Activated CD4-positive, alpha-beta T cell treated with anti-CD3 and anti-CD28 coated beads for 36 hours (primary cell): ENCODE measurements at regions of chr22 and their contacts with region 1.

Region 1: DNA sequence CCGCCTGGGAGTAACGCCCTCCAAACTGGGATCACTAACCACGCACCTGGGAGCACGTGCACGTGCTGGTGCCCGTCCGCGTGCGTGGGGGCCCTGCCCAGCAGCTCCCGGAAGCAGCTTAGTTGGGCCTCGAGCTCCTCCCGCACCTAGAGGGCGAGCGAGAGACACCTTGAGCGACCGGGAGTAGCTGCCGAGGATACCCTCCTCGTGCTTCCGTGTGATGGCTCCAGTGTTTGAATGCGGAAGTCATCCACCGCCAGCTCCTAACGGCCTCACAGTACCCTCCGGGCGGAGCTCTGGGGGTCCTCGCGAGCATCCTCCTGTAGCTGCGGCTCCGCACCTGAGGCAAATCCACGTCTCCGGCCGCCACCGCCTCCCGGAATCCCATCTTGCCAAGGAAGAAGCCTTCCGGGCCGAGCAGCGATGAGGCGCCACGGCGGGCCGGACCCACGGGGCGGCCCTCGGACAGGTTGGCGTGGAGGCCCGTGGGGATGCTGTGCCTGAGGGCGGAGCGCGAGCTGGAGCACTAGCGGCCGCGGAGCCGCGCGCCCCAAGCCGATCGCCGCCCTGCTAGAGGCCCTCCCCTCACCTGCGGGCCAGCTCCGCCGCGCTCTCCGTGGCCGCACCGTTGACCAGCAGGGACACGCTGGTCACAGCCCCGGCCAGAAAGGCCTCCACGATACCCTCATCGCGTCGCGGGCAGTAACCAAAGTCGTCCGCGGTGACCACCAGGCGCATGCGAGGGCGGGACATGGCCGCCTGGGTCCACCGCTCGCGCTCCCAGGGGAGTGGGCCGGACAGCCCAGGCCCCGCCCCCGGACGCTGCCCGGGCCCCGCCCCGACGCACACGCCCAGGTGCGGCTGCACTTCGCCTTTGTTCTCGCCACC is at the start of gene YDJC:
- DNase-seq: peak; percentile 98
- ATAC-seq: peak; percentile 88
- H3K4me3 Mint-ChIP-seq: peak within 1 kb of the TSS; percentile 83
- H3K27ac Mint-ChIP-seq: peak within 1 kb of the TSS; percentile 93
- H3K4me1 Mint-ChIP-seq: peaks cover 34% of the 10 kb centered on the region
- H3K27me3 Mint-ChIP-seq: no peaks in the 10 kb centered on the region
- total RNA-seq, gene YDJC: 43.4 to 54.0 TPM

Region 2: GRCh38 chr22:21567456-21568346 is 61.8 kb before region 1 on chr22 and contains the start of gene UBE2L3:
- CTCF ChIA-PET with region 1: interaction called, 9 read pairs
- POLR2A ChIA-PET with region 1: interaction called, 4 read pairs
- intact Hi-C with region 1: loop called in 1 of 2 experiments (anchors 1 kb)
- DNase-seq: peak; percentile 93
- ATAC-seq: peak; percentile 68
- H3K4me3 Mint-ChIP-seq: peak within 1 kb of the TSS; percentile 92
- H3K27ac Mint-ChIP-seq: peak within 1 kb of the TSS; percentile 96
- H3K4me1 Mint-ChIP-seq: peaks cover 38% of the 10 kb centered on the region
- H3K27me3 Mint-ChIP-seq: no peaks in the 10 kb centered on the region
- total RNA-seq, gene UBE2L3: 57.3 to 75.5 TPM

Region 3: GRCh38 chr22:21606775-21607174 is 22.7 kb before region 1 on chr22:
- CTCF ChIA-PET with region 1: interaction called, 11 read pairs
- POLR2A ChIA-PET with region 1: no interaction called
- intact Hi-C with region 1: no loop called
- DNase-seq: no peak
- ATAC-seq: peak; percentile 55
- H3K4me3 Mint-ChIP-seq: no peak overlapping the region
- H3K27ac Mint-ChIP-seq: no peak overlapping the region
- H3K4me1 Mint-ChIP-seq: peaks cover 22% of the 10 kb centered on the region
- H3K27me3 Mint-ChIP-seq: no peaks in the 10 kb centered on the region

Region 4: DNA sequence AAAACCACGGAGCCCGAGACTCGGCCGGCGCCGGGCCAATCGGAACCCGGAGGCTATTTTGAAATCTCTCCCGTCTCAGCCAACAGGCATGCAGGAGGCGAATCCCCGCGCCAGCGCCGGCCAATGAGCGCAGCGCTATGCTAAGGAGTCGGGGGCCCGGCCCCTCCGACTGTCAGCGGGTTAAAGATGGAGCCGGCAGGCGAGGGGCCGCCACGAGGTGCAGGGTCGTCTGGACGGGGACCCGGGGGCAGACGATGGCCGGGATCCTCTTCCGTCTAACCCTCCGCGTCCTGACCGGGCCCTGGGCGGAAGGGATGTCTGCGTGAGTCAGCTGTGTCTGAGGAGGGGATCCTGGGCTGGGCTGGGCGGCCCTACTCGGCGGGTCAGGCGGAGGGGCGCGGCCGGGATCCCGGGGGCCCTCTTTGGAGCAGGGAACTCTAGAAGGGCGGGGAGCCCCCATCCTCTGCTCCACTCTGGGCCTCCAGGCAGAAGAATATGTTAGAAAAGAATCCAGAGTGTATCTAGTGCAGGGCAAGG is 22.6 kb after region 1 on chr22:
- CTCF ChIA-PET with region 1: interaction called, 209 read pairs
- POLR2A ChIA-PET with region 1: interaction called, 5 read pairs
- intact Hi-C with region 1: loop called in 1 of 2 experiments (anchors 1 kb)
- DNase-seq: peak; percentile 95
- ATAC-seq: peak; percentile 97
- H3K4me3 Mint-ChIP-seq: peak overlapping the region; percentile 85
- H3K27ac Mint-ChIP-seq: peak overlapping the region; percentile 86
- H3K4me1 Mint-ChIP-seq: peaks cover 23% of the 10 kb centered on the region
- H3K27me3 Mint-ChIP-seq: no peaks in the 10 kb centered on the region

Region 5: GRCh38 chr22:21666786-21667185 is 37.3 kb after region 1 on chr22:
- CTCF ChIA-PET with region 1: interaction called, 3 read pairs
- POLR2A ChIA-PET with region 1: no interaction called
- intact Hi-C with region 1: loop called in 1 of 2 experiments (anchors 1 kb)
- DNase-seq: no peak
- ATAC-seq: no peak
- H3K4me3 Mint-ChIP-seq: peak overlapping the region; percentile 93
- H3K27ac Mint-ChIP-seq: peak overlapping the region; percentile 96
- H3K4me1 Mint-ChIP-seq: peaks cover 27% of the 10 kb centered on the region
- H3K27me3 Mint-ChIP-seq: no peaks in the 10 kb centered on the region

Region 6: DNA sequence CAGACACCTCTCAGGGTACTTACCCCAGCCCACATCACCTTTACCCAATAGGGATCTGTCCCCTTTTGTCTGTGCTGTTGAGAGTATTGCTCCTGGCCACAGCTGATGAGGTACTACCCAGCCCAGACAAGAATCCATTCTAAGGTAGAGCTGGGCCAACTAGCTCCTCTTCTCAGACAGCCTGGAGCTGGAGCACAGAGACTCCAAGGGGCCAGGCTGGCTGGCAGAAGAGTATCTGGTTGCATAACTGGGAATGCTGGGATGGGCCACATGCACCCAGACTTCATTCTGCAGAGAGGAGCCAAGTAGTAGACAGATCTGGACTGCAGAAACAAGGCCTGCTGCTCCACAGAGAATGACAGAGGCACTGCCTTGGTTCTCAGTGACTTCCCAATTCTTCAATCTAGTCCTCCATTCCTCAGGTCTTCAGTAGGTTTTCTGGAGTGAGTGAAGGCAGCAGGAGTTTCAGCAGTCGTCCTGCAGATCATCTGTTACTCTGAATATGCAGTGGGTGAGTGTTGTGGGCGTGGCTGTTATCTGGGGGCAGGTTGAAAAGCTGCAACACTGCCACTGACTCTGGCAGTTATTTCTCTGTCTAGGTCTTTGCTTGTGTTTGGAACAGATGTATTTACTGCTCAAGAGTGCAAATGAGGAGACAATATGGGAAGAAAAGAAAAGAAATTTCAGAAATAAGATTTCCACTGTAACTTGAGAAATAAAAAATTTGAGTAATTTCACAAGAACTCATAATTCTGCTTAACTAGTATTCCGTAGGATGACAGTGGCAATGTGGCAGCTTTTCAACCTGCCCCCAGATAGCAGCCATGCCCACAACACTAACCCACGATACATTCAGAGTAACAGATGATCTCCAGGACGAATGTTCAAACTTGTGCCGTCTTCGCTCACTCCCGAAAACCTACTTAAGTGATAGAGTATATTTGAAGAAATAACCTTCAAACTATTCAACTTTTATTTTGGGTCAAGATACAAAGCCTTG is 203.1 kb after region 1 on chr22:
- CTCF ChIA-PET with region 1: no interaction called
- POLR2A ChIA-PET with region 1: no interaction called
- intact Hi-C with region 1: no loop called
- DNase-seq: no peak
- ATAC-seq: no peak
- H3K4me3 Mint-ChIP-seq: no peak overlapping the region
- H3K27ac Mint-ChIP-seq: peak overlapping the region; percentile 7
- H3K4me1 Mint-ChIP-seq: peaks cover 68% of the 10 kb centered on the region
- H3K27me3 Mint-ChIP-seq: no peaks in the 10 kb centered on the region

Region 7: DNA sequence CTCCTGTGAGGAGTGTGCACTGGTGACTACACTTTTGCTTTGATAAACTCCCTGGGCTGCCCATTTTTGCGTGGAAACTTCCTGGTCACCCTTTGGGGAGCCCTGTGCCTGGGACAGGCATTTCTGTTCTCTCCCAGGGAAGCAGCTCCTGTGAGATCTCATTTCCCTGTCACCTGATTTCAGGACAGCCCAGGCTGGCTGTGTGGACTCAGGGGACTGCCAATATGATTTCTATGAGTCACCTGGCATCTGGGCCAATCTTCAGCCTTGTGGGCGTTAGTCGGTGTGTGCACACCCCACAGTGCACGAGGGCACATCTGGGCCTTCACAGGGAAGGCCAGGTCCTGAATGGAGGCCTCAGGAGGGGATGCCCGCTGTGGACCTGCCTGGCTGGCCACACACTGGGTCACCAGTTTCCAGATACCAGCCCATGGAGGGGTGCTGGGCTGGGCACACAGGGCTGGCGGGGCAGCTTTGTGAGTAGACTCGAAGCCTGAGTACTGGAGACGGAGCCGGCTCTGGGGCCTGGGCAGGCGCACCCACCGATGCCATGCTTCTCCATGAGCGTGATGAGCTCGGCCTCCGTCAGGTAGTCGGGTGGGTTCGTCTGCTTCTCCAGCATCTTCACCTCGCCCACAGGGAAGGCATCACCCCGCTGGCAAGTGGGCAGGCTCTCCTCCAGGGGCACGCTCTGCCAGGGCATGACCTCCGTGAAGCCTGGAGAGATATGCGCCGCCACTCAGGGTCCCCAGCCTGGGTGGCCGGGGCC is 332.6 kb after region 1 on chr22:
- CTCF ChIA-PET with region 1: no interaction called
- POLR2A ChIA-PET with region 1: no interaction called
- intact Hi-C with region 1: no loop called
- DNase-seq: no peak
- ATAC-seq: no peak
- H3K4me3 Mint-ChIP-seq: no peak overlapping the region
- H3K27ac Mint-ChIP-seq: no peak overlapping the region
- H3K4me1 Mint-ChIP-seq: no peaks in the 10 kb centered on the region
- H3K27me3 Mint-ChIP-seq: no peaks in the 10 kb centered on the region

Region 8: GRCh38 chr22:22215659-22216449 is 586.3 kb after region 1 on chr22:
- CTCF ChIA-PET with region 1: no interaction called
- POLR2A ChIA-PET with region 1: no interaction called
- intact Hi-C with region 1: no loop called
- DNase-seq: no peak
- ATAC-seq: peak; percentile 34
- H3K4me3 Mint-ChIP-seq: no peak overlapping the region
- H3K27ac Mint-ChIP-seq: no peak overlapping the region
- H3K4me1 Mint-ChIP-seq: peaks cover 16% of the 10 kb centered on the region
- H3K27me3 Mint-ChIP-seq: no peaks in the 10 kb centered on the region

Region 9: DNA sequence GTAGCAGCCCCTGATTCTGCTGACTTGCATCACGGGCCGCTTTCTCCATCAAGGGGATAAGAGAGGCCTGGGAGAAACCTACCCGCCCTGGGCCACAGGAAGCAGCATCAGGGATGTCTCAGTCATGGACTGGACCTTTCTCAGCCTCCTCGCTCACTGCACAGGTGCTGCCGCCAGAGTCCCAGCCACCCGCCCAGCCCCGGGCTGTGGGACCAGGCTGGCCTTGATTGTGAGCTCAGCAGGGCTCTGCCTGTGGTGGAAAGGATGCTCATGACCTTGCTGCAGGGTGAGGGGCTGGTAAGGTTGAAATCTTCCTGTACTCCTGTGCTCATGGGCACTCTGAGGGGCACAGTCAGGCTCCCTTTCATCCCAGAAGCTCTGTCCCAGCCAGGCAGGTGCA is 988.9 kb after region 1 on chr22:
- CTCF ChIA-PET with region 1: no interaction called
- POLR2A ChIA-PET with region 1: no interaction called
- intact Hi-C with region 1: no loop called
- DNase-seq: no peak
- ATAC-seq: no peak
- H3K4me3 Mint-ChIP-seq: no peak overlapping the region
- H3K27ac Mint-ChIP-seq: no peak overlapping the region
- H3K4me1 Mint-ChIP-seq: peaks cover 13% of the 10 kb centered on the region
- H3K27me3 Mint-ChIP-seq: peaks cover 7% of the 10 kb centered on the region